Mammary epithelial cell (primary cell): ENCODE measurements at regions of chr14 and their contacts with region 1.

Region 1: DNA sequence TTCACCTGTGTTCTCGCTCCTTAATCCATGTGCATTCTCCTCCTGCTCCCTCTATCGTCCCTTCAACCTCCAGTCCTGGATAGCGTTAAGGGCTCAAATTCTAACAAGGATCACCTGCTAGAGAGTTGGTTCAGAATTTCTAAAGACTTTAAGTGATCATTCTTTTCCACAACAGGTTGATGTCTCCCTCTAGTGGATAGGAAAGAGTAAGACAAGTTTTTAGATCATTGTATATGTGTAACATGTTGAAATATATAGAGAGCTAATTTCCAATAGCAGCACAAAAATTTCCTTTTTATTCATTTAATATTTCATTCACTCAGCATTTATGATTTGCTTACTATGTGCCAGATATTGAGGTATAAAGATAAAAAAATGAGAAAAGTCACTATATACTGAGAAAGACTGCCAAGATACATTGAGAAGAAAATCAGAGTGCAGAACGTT is 9.3 kb upstream of the ESR2 start:
- DNase-seq: peak; percentile 65
- H3K4me3 ChIP-seq: no peak overlapping the region
- H3K27ac ChIP-seq: no peak overlapping the region
- H3K4me1 ChIP-seq: no peaks in the 10 kb centered on the region
- H3K27me3 ChIP-seq: no peaks in the 10 kb centered on the region
- CTCF ChIP-seq: peak; percentile 71 to 83

Region 2: GRCh38 chr14:63448841-63449240 is 854.7 kb before region 1 on chr14:
- CTCF ChIA-PET with region 1: no interaction called
- dilution Hi-C with region 1: no loop called
- in situ Hi-C with region 1: no loop called
- intact Hi-C with region 1: no loop called
- DNase-seq: peak; percentile 75
- H3K4me3 ChIP-seq: no peak overlapping the region
- H3K27ac ChIP-seq: peak overlapping the region; percentile 37
- H3K4me1 ChIP-seq: peaks cover 14% of the 10 kb centered on the region
- H3K27me3 ChIP-seq: no peaks in the 10 kb centered on the region
- CTCF ChIP-seq: no peak

Region 3: DNA sequence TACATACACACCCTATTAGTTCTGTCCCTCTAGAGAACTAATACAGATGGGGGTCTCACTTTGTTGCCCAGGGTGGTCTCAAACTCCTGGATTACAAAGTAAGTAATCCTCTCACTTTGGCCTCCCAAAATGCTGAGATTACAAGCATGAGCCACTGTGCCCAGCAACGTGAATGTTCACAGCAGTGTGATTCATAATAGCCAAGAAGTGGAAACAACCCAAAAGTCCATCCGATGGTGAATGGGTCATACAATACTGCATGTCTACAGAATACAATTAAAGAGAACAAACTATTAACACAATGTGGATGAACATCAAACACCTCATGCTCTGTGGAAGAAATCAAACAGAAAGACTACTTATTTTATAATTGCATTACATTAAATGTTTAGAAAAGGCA is 508.0 kb before region 1 on chr14:
- CTCF ChIA-PET with region 1: no interaction called
- dilution Hi-C with region 1: no loop called
- in situ Hi-C with region 1: loop called (anchors 10 kb)
- intact Hi-C with region 1: loop called (anchors 1 kb)
- DNase-seq: no peak
- H3K4me3 ChIP-seq: no peak overlapping the region
- H3K27ac ChIP-seq: no peak overlapping the region
- H3K4me1 ChIP-seq: no peaks in the 10 kb centered on the region
- H3K27me3 ChIP-seq: no peaks in the 10 kb centered on the region
- CTCF ChIP-seq: no peak

Region 4: GRCh38 chr14:63840981-63841380 is 462.5 kb before region 1 on chr14:
- CTCF ChIA-PET with region 1: no interaction called
- dilution Hi-C with region 1: no loop called
- in situ Hi-C with region 1: no loop called
- intact Hi-C with region 1: loop called (anchors 2 kb)
- DNase-seq: no peak
- H3K4me3 ChIP-seq: no peak overlapping the region
- H3K27ac ChIP-seq: no peak overlapping the region
- H3K4me1 ChIP-seq: no peaks in the 10 kb centered on the region
- H3K27me3 ChIP-seq: no peaks in the 10 kb centered on the region
- CTCF ChIP-seq: peak; percentile 17 to 29

Region 5: GRCh38 chr14:64026600-64026999 is 276.9 kb before region 1 on chr14:
- CTCF ChIA-PET with region 1: no interaction called
- dilution Hi-C with region 1: no loop called
- in situ Hi-C with region 1: loop called (anchors 10 to 25 kb)
- intact Hi-C with region 1: no loop called
- DNase-seq: no peak
- H3K4me3 ChIP-seq: no peak overlapping the region
- H3K27ac ChIP-seq: no peak overlapping the region
- H3K4me1 ChIP-seq: no peaks in the 10 kb centered on the region
- H3K27me3 ChIP-seq: no peaks in the 10 kb centered on the region
- CTCF ChIP-seq: peak in 1 of 2 donors; percentile 3

Region 6: GRCh38 chr14:64110802-64111201 is 192.7 kb before region 1 on chr14:
- CTCF ChIA-PET with region 1: interaction called, 24 read pairs
- dilution Hi-C with region 1: no loop called
- in situ Hi-C with region 1: no loop called
- intact Hi-C with region 1: no loop called
- DNase-seq: peak; percentile 58
- H3K4me3 ChIP-seq: no peak overlapping the region
- H3K27ac ChIP-seq: no peak overlapping the region
- H3K4me1 ChIP-seq: peaks cover 11% of the 10 kb centered on the region
- H3K27me3 ChIP-seq: no peaks in the 10 kb centered on the region
- CTCF ChIP-seq: no peak

Region 7: DNA sequence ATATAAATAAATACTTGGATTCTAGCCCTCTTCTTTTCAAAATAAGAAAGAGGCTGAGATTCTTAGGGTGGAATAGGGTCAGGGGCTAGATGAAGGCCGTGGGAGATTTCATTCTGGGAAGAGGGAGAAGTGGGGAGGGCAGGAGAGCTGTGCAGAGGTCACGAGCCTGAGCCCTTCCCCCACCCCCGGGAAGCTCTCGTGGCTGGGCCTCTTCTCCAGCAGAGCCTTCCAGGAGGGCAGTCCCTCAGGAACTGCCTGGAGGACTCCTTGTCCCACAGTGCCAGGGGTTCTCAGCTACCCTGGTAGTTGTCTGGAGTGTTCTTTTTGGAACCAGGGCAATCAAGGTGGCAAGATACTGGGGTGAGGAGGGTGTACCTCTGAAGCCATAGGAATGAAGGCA is 103.3 kb before region 1 on chr14:
- CTCF ChIA-PET with region 1: no interaction called
- dilution Hi-C with region 1: loop called (anchors 5 kb)
- in situ Hi-C with region 1: no loop called
- intact Hi-C with region 1: no loop called
- DNase-seq: no peak
- H3K4me3 ChIP-seq: no peak overlapping the region
- H3K27ac ChIP-seq: no peak overlapping the region
- H3K4me1 ChIP-seq: peaks cover 9% of the 10 kb centered on the region
- H3K27me3 ChIP-seq: no peaks in the 10 kb centered on the region
- CTCF ChIP-seq: no peak

Region 8: GRCh38 chr14:64217308-64217707 is 86.2 kb before region 1 on chr14:
- CTCF ChIA-PET with region 1: no interaction called
- dilution Hi-C with region 1: no loop called
- in situ Hi-C with region 1: no loop called
- intact Hi-C with region 1: no loop called
- DNase-seq: no peak
- H3K4me3 ChIP-seq: no peak overlapping the region
- H3K27ac ChIP-seq: no peak overlapping the region
- H3K4me1 ChIP-seq: no peaks in the 10 kb centered on the region
- H3K27me3 ChIP-seq: no peaks in the 10 kb centered on the region
- CTCF ChIP-seq: no peak

Region 9: GRCh38 chr14:64253672-64254071 is 49.8 kb before region 1 on chr14:
- CTCF ChIA-PET with region 1: no interaction called
- dilution Hi-C with region 1: no loop called
- in situ Hi-C with region 1: no loop called
- intact Hi-C with region 1: no loop called
- DNase-seq: peak; percentile 48
- H3K4me3 ChIP-seq: no peak overlapping the region
- H3K27ac ChIP-seq: no peak overlapping the region
- H3K4me1 ChIP-seq: no peaks in the 10 kb centered on the region
- H3K27me3 ChIP-seq: no peaks in the 10 kb centered on the region
- CTCF ChIP-seq: no peak

Region 10: DNA sequence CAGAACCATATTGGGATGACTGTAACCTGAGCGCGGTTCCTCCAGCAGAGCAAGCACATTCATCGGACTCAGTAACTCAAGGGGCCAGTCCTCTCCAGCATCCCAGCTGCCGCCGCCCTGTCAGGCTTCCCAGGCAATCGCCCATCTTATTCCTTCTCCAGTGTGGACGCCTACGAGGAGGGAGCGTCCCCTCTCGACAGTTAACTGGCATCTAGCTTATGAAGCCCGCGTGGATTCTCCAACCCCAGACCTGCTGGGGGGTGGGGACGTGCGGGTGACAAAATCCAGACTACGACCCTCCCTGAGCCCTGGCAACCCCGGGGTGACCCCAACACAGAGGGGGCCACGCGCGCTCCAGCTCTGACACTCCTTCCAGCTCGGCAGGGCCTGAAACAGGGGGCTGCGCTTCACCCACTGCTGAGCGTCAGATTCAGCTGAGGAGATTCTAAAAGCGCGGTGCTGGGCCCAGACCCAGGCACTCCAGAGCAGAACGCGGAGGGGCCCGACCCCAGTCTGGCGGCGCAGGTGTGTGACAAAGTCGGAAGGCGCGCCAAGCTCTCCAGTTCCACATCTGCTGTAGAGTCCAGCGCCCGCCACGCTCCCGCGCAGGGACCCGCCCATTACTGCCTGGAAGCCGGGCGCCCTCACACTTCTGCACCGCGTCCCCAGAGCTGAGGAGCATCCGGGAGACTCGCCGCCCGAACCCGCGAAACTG is 34.6 kb after region 1 on chr14:
- CTCF ChIA-PET with region 1: no interaction called
- dilution Hi-C with region 1: no loop called
- in situ Hi-C with region 1: no loop called
- intact Hi-C with region 1: no loop called
- DNase-seq: peak; percentile 66
- H3K4me3 ChIP-seq: peak overlapping the region; percentile 69 to 93 (median 77)
- H3K27ac ChIP-seq: peak overlapping the region; percentile 74
- H3K4me1 ChIP-seq: peaks cover 13% of the 10 kb centered on the region
- H3K27me3 ChIP-seq: no peaks in the 10 kb centered on the region
- CTCF ChIP-seq: peak in 1 of 2 donors; percentile 33